ENCODE measurements at regions of chr4 and their contacts with region 1.

Region 1: GRCh38 chr4:41692717-41693345 is 55.7 kb downstream of the PHOX2B start:
- DNase-seq: peak; percentile 57 to 75 (median 66)
- ATAC-seq: peak; percentile 94
- H3K4me3 ChIP-seq: no peak overlapping the region
- H3K27ac ChIP-seq: no peak overlapping the region
- H3K4me1 ChIP-seq: no peaks in the 10 kb centered on the region
- H3K27me3 ChIP-seq: no peaks in the 10 kb centered on the region
- CTCF ChIP-seq: peak; percentile 86 to 92 (median 90)
- EP300 ChIP-seq: no peak
- POLR2A ChIP-seq: no peak
- RAD21 ChIP-seq: peak; percentile 84 to 85

Region 2: GRCh38 chr4:41882625-41883347 is 190.0 kb after region 1 on chr4:
- CTCF ChIA-PET with region 1: interaction called, 24 read pairs
- POLR2A ChIA-PET with region 1: no interaction called
- in situ Hi-C with region 1: loop called (anchors 5 kb)
- intact Hi-C with region 1: loop called (anchors 1 kb)
- DNase-seq: peak; percentile 54 to 84 (median 78)
- ATAC-seq: peak; percentile 97
- H3K4me3 ChIP-seq: no peak overlapping the region
- H3K27ac ChIP-seq: no peak overlapping the region
- H3K4me1 ChIP-seq: peaks cover 0 to 9% of the 10 kb centered on the region in 2 experiments; a peak in 1 of 5 replicates
- H3K27me3 ChIP-seq: peaks cover 24 to 38% of the 10 kb centered on the region in 2 experiments
- CTCF ChIP-seq: peak; percentile 78 to 88 (median 82)
- EP300 ChIP-seq: no peak
- POLR2A ChIP-seq: no peak
- RAD21 ChIP-seq: peak; percentile 52 to 65

Region 3: GRCh38 chr4:41887821-41888686 is 195.2 kb after region 1 on chr4:
- CTCF ChIA-PET with region 1: interaction called, 24 read pairs
- POLR2A ChIA-PET with region 1: no interaction called
- in situ Hi-C with region 1: loop called (anchors 5 kb)
- intact Hi-C with region 1: loop called (anchors 1 kb)
- DNase-seq: peak in 3 of 4 experiments; percentile 39 to 60 (median 46)
- ATAC-seq: no peak
- H3K4me3 ChIP-seq: no peak overlapping the region
- H3K27ac ChIP-seq: no peak overlapping the region
- H3K4me1 ChIP-seq: no peaks in the 10 kb centered on the region
- H3K27me3 ChIP-seq: peaks cover 0 to 3% of the 10 kb centered on the region in 2 experiments; a peak in 3 of 5 replicates
- CTCF ChIP-seq: peak; percentile 59 to 80 (median 70); a peak in 5 of 6 replicates
- EP300 ChIP-seq: no peak
- POLR2A ChIP-seq: no peak
- RAD21 ChIP-seq: peak; percentile 64 to 65

Region 4: DNA sequence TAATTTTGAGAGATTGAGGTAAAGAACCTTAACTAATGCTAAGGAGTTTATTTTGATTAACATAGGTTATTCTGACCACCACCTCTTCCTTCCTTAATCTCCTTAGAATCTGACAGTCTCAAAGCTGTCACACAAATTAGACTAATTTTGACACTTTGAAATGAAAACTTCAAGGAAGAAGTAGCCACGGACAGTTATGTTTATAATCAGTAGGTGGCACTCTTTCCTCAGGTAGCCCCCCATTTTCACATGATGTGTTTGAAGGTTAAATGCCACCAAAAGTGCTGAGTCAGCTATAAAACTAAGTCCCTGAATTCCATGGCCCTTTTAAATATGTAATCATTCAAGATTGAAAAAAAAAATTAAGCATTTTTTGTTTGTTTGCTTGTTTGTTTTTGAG is 264.8 kb after region 1 on chr4:
- CTCF ChIA-PET with region 1: interaction called, 5 read pairs
- POLR2A ChIA-PET with region 1: no interaction called
- in situ Hi-C with region 1: no loop called
- intact Hi-C with region 1: loop called (anchors 10 kb)
- DNase-seq: peak; percentile 38 to 63 (median 56)
- ATAC-seq: peak; percentile 86
- H3K4me3 ChIP-seq: no peak overlapping the region
- H3K27ac ChIP-seq: no peak overlapping the region
- H3K4me1 ChIP-seq: no peaks in the 10 kb centered on the region
- H3K27me3 ChIP-seq: no peaks in the 10 kb centered on the region
- CTCF ChIP-seq: peak; percentile 58 to 81 (median 62)
- EP300 ChIP-seq: no peak; the same call in 1 of the 2 replicates
- POLR2A ChIP-seq: no peak
- RAD21 ChIP-seq: peak; percentile 57 to 69

Region 5: GRCh38 chr4:42282081-42282901 is 589.5 kb after region 1 on chr4:
- CTCF ChIA-PET with region 1: interaction called, 3 read pairs
- POLR2A ChIA-PET with region 1: no interaction called
- in situ Hi-C with region 1: no loop called
- intact Hi-C with region 1: loop called (anchors 5 kb)
- DNase-seq: peak; percentile 59 to 69 (median 62)
- ATAC-seq: peak; percentile 95
- H3K4me3 ChIP-seq: no peak overlapping the region
- H3K27ac ChIP-seq: no peak overlapping the region
- H3K4me1 ChIP-seq: no peaks in the 10 kb centered on the region
- H3K27me3 ChIP-seq: no peaks in the 10 kb centered on the region
- CTCF ChIP-seq: peak; percentile 65 to 79 (median 76)
- EP300 ChIP-seq: no peak
- POLR2A ChIP-seq: no peak
- RAD21 ChIP-seq: peak; percentile 57 to 70

Region 6: DNA sequence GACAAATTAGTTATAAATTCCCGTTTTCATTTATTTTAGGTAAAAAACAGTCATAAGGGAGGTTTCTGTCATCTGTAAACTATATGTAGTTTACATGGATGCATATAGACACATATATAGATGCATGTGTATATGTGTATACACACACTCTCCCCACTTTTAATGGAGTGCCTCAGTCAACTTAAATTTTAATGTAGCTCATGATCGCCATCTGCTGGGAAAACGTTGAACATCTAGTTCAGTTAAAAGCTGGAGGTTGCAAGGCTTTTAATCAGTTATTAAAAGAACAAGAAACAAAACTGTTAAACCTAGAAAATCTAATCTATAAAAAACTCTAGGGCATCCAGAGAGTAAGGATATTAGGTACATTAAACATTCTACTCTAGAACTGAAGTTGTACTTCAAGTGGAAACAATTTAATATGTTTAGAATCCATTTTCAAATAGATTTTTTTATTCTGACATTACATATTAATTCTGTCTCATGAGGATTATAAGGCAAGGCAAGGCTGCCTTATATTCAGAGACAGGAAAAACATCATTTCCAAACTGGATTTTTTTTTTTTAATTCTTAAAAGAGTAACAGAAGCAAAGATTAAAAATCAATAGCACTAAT is 827.1 kb after region 1 on chr4:
- CTCF ChIA-PET with region 1: interaction called, 3 read pairs
- POLR2A ChIA-PET with region 1: no interaction called
- in situ Hi-C with region 1: loop called (anchors 25 kb)
- intact Hi-C with region 1: loop called (anchors 2 kb)
- DNase-seq: peak; percentile 19 to 59 (median 36)
- ATAC-seq: peak; percentile 85
- H3K4me3 ChIP-seq: no peak overlapping the region
- H3K27ac ChIP-seq: no peak overlapping the region
- H3K4me1 ChIP-seq: no peaks in the 10 kb centered on the region
- H3K27me3 ChIP-seq: no peaks in the 10 kb centered on the region
- CTCF ChIP-seq: peak; percentile 26 to 62 (median 48); a peak in 4 of 6 replicates
- EP300 ChIP-seq: no peak
- POLR2A ChIP-seq: no peak
- RAD21 ChIP-seq: peak; percentile 61 to 78

Region 7: DNA sequence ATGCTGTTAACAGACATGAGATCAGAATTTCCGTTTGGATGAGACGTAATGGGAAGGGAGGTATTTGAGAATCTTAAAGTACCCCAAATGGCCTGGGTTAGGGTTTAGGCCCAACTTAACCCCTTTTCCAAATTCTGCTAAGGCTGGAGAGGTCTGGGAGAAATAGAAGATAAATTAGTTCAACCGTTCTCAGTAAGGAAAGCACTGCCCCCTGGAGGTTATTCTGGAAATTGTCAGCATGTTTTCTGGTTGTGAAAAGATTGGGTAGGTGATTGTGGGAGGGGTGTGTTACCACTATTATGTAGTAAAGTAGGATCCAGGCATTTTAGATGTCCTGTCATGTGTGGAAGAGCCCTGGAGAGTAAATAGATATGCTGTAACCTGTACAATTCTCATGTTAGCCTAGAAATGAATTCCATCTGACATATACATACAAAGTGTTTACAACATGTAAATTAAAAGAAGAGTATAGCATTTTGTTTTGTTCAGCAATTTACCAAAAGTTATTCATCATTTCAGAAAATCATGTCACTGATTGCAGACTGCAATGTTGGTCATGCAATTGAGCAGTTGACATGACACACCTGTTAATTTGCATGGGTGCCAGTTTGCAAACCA is 1172.8 kb after region 1 on chr4:
- CTCF ChIA-PET with region 1: no interaction called
- POLR2A ChIA-PET with region 1: no interaction called
- in situ Hi-C with region 1: no loop called
- intact Hi-C with region 1: loop called (anchors 10 kb)
- DNase-seq: peak; percentile 13 to 58 (median 31)
- ATAC-seq: peak; percentile 57; the same call in 2 of the 3 replicates
- H3K4me3 ChIP-seq: no peak overlapping the region
- H3K27ac ChIP-seq: no peak overlapping the region
- H3K4me1 ChIP-seq: no peaks in the 10 kb centered on the region
- H3K27me3 ChIP-seq: no peaks in the 10 kb centered on the region
- CTCF ChIP-seq: peak; percentile 41 to 68 (median 57); a peak in 5 of 6 replicates
- EP300 ChIP-seq: no peak
- POLR2A ChIP-seq: no peak
- RAD21 ChIP-seq: peak; percentile 56 to 63